Cardiac septum (tissue), 1 donor: ENCODE measurements at regions of chr6 and their contacts with region 1.

Region 1: GRCh38 chr6:144104898-144105487 is 9.6 kb upstream of the SF3B5 start:
- DNase-seq: no peak

Region 2: DNA sequence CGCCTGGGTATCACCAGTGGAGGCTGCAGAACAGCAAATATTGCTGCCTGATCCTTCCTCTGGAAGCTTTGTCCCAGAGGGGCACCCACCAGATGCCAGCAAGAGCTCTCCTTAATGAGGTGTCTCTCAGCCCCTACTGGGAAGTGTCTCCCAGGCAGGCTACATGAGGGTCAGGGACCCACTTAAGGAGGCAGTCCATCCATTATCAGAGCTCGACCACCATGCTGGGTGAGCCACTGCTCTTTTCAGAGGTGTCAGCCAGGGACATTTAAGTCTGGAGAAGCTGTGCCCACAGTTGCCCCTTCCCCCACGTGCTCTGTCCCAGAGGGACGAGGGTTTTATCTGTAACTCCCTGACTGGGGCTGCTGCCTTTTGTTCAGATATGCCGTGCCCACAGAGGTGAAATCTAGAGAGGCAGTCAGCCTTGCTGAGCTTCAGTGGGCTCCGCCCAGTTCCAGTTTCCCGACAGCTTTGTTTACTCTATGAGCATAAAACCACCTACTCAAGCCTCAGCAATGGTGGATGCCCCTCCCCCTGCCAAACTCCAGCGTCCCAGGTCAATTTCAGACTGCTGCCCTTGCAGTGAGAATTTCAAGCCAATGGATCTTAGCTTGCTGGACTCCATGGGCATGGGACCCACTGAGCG is 1070.2 kb before region 1 on chr6:
- intact Hi-C with region 1: no loop called
- DNase-seq: no peak

Region 3: GRCh38 chr6:144149891-144150709 is 45.1 kb after region 1 on chr6 and contains the start of gene STX11:
- intact Hi-C with region 1: loop called (anchors 5 kb)
- DNase-seq: peak; percentile 93
- total RNA-seq, gene STX11: 8.8 TPM

Region 4: DNA sequence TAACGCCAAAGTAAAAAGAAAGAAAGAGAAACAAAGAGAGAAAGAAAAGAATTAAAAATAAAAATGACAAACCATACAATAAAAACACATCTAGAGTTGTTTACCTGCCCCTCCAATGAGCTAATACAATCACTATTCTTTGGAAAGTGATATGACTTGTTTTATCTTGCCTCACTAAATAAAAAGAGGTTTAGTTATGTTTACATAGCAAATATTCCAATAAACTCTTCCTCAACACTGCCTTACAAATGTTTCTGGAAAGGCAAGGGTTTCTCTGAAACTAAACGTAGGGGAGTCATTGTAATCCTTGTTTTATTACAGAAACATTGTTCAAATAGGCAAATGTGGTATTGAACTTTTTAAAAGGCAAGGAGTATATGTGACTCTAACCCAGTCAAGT is 1234.1 kb after region 1 on chr6:
- intact Hi-C with region 1: no loop called
- DNase-seq: no peak